IMR-90 (cell line): ENCODE measurements at regions of chr13 and their contacts with region 1.

Region 1: DNA sequence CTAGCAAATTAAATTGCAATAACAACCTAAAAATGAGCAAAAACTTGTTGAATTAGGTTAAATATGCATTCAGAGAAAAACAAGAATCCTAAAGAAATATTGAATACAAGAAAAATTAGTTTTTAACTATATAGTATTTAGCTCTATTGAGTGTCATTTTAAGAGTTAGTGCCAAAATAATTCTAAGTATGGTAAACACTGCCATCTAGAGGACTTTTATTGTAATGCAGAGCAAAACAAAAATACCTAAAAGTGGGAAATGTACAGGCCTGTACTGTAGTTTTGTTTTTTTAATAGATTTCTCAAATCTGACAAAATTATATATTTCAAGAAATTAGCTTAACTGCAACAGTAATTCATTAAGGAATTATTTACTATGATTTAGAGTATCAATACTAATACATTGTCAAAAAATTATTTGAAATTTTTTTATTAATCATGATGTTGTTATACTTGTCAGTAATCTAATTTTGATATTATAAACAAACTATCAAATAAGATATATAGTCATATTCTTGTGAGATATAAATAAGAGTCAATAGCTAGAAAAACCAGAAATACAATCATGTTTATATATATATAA is 8.2 kb upstream of the PCDH9 start:
- DNase-seq: peak; percentile 36
- ATAC-seq: peak; percentile 56
- H3K4me3 ChIP-seq: no peak overlapping the region
- H3K27ac ChIP-seq: no peak overlapping the region
- H3K4me1 ChIP-seq: no peaks in the 10 kb centered on the region
- H3K27me3 ChIP-seq: no peaks in the 10 kb centered on the region
- CTCF ChIP-seq: peak; percentile 77
- POLR2A ChIP-seq: no peak
- RAD21 ChIP-seq: peak; percentile 74

Region 2: DNA sequence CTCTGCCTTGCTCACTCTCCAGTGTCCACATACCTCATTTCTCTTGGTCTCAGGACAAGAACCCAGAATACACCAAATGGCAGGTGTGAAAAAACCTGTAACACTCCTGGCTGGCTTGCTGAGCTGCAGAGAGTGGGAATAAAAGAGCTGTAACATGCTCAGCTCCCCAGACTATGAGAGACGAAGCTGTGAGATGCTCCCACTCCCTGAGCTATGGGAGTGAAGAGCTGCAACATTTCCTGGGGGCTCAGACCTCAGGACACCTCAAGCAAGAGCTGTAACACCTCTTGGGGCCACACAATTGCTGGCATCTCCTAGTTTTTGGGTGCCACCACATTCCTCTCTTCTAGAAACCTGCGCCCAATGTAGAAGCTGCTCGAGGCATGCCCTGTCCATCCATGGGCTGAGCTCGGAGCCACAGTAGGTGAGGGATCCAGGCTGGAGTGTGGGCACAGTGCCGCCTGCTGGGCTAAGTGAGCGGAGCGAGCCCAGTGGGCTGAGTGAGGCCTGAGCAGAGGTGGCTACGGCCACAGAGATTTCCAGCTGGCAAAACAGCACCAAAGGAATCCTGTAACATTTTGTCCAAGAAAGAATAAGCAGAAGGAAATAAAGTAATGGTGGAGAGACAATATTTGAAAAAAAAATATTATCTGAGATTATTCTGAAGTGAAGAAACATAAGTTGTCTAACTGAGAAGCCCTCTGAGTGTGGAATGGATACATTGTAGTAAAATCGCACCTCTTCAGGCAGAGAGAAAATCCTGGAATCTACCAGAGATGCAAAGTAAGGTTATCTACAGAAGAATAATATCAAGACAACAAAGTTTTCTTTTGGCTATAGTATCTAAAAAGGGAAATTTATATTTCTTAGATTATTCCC is 177.9 kb after region 1 on chr13:
- CTCF ChIA-PET with region 1: interaction called, 4 read pairs
- POLR2A ChIA-PET with region 1: no interaction called
- dilution Hi-C with region 1: no loop called
- in situ Hi-C with region 1: loop called (anchors 10 kb)
- intact Hi-C with region 1: no loop called
- DNase-seq: peak; percentile 29
- ATAC-seq: peak; percentile 97
- H3K4me3 ChIP-seq: no peak overlapping the region
- H3K27ac ChIP-seq: no peak overlapping the region
- H3K4me1 ChIP-seq: no peaks in the 10 kb centered on the region
- H3K27me3 ChIP-seq: no peaks in the 10 kb centered on the region
- CTCF ChIP-seq: peak; percentile 73
- POLR2A ChIP-seq: no peak
- RAD21 ChIP-seq: peak; percentile 80